Right ventricle myocardium inferior (tissue), 1 donor: ENCODE measurements at regions of chr6 and their contacts with region 1.

Region 1: GRCh38 chr6:6927521-6928371 is 180.0 kb upstream of the RREB1 start:
- DNase-seq: peak; percentile 76
- ATAC-seq: peak; percentile 88

Region 2: GRCh38 chr6:6479785-6480184 is 448.0 kb before region 1 on chr6:
- intact Hi-C with region 1: no loop called
- DNase-seq: no peak
- ATAC-seq: peak; percentile 50

Region 3: DNA sequence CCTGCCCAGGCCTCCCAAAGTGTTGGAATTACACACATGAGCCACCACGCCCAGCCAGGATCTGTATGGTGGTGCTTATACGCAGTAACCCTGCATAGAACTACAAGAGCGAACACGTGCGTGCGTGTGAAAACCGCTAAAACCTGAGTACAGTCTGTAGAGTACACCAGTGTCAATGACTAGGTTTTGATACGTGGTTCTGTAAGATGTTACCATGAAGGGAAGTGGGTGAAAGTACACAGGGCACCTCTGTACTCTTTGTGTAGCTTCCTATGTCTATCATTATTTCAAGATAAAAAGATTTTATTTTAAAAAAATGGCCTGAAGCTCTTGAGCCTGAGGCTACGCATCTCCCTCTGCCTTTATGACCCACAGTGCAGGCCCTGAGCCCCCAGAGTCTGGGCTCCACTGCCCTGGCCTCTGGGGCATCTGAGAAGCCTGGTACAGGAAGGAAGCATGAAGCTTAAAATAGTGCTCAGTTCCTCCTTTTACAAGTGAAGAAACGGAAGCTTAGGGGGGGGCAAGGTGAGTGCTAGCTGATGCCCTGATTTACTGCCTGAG is 317.6 kb before region 1 on chr6:
- intact Hi-C with region 1: no loop called
- DNase-seq: no peak
- ATAC-seq: no peak

Region 4: DNA sequence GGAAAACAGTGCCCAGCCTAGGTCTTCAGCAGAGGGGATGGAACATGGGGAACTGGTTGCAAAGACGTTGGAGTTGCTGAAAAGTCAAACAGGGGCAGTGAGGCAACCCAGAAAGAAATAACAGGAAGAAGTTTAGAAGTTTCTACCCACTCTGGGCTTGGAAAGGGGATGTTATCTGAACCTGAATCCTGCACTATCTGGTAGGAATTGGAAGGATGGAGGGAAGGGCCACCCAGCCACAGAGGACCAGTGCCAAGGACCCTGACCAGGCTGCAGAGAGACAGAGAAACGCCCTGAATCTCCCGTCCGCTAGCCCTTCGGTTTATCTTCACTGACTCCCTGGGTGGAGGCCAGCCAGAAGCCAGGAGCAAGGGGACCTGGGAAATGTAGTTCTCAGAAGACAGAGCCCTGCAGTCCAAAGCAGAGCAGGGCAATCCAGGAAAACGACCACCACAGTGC is 37.3 kb before region 1 on chr6:
- intact Hi-C with region 1: no loop called
- DNase-seq: peak; percentile 76
- ATAC-seq: peak; percentile 47

Region 5: GRCh38 chr6:6952484-6952883 is 24.7 kb after region 1 on chr6:
- intact Hi-C with region 1: no loop called
- DNase-seq: no peak
- ATAC-seq: no peak

Region 6: GRCh38 chr6:6975459-6976111 is 47.8 kb after region 1 on chr6:
- intact Hi-C with region 1: loop called (anchors 2 kb)
- DNase-seq: no peak
- ATAC-seq: peak; percentile 85

Region 7: DNA sequence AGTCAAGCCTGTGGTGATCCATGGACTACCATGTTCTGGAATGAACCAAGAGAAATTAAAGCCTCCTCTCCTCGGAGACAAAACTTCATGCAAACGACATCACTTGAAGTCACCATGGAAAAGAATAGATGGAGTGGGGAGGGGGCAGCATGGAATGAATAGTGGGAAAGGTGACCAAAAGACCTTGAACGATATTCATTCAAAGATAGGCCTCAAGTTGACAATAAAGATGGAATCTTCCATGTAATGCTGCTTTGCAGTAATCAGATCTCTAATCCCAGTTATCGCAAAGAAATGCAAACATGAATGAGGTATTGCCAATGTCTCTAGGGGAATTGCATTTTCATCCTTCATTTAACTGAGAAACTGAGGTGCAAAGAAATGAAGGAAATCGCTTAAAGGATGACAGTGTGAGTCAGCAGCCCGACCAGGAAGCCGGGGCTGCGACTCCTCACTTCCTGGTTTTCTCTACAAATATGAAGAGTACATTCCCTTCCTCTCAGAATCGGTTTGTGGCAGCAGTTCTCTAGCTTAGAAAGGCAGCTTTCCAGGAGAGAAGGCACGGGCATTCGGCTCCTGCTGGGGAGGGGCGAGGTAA is 114.4 kb after region 1 on chr6:
- intact Hi-C with region 1: loop called (anchors 10 kb)
- DNase-seq: no peak
- ATAC-seq: peak; percentile 14

Region 8: GRCh38 chr6:7243179-7243981 is 315.6 kb after region 1 on chr6:
- intact Hi-C with region 1: loop called (anchors 5 kb)
- DNase-seq: no peak
- ATAC-seq: peak; percentile 51